ENCODE measurements at regions of chr12 and their contacts with region 1.

Region 1: GRCh38 chr12:32821710-32822109 is 66.0 kb upstream of the YARS2 start:
- DNase-seq: no peak
- ATAC-seq: peak; percentile 84

Region 2: DNA sequence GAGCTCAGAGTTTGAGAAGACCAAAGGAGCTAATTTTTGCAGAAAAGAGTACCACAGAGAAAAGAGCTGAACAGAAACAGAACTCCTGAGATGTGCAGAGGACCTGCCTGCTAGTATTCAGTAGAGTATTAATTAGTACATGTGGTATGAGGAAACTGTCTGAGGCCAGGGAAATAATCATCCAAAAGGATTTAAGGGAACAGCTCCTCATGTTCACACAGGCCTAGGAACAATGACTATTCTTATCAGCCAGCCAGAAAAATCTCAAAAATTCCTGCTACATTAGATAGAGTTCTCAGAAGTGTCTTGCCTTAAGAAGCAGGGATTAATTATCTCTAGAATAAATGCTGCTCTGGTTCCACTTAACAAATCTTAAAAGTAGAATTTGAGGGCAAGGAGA is 38.5 kb after region 1 on chr12:
- intact Hi-C with region 1: no loop called
- DNase-seq: no peak
- ATAC-seq: no peak

Region 3: GRCh38 chr12:32877601-32878459 is 56.1 kb after region 1 on chr12:
- intact Hi-C with region 1: loop called (anchors 10 kb)
- DNase-seq: peak; percentile 87
- ATAC-seq: peak; percentile 86

Measured in Right ventricle myocardium superior (tissue), 1 donor.